ENCODE measurements at regions of chr2 and their contacts with region 1.

Region 1: DNA sequence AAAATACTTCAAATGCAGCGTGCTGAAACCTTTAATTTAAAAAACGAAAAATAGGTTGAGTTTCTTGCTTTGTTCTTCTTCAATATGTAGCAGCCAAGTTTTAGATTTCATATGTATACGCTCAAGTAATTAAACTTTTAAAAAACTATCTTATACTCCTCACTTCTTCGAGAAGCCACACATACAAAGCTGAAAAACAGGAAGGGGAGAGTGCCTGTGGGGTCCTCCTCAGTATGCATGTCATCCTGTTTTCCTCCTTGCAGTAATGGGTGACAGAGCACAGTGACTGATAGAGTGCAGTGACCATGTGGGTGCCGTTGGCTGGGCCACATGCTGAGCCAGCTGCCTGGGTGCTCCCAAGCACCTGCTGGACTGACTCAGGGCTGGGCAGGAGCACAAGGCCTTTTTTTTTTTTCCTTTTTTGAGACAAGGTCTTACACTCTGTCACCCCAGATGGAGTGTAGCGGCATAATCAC is 33.3 kb downstream of the UXS1 start:
- DNase-seq: no peak
- H3K4me3 ChIP-seq: no peak overlapping the region
- H3K27ac ChIP-seq: no peak overlapping the region
- H3K4me1 ChIP-seq: peaks cover 11% of the 10 kb centered on the region
- H3K27me3 ChIP-seq: no peaks in the 10 kb centered on the region
- CTCF ChIP-seq: no peak

Region 2: GRCh38 chr2:106113361-106113966 is 47.4 kb before region 1 on chr2:
- CTCF ChIA-PET with region 1: no interaction called
- dilution Hi-C with region 1: loop called (anchors 5 kb)
- in situ Hi-C with region 1: no loop called
- intact Hi-C with region 1: no loop called
- DNase-seq: no peak
- H3K4me3 ChIP-seq: no peak overlapping the region
- H3K27ac ChIP-seq: no peak overlapping the region
- H3K4me1 ChIP-seq: peaks cover 13% of the 10 kb centered on the region
- H3K27me3 ChIP-seq: no peaks in the 10 kb centered on the region
- CTCF ChIP-seq: no peak